ENCODE measurements at regions of chr5 and their contacts with region 1.

Region 1: GRCh38 chr5:120419127-120419526 is 45.0 kb upstream of the PRR16 start:
- DNase-seq: no peak
- ATAC-seq: no peak
- H3K4me3 ChIP-seq: no peak overlapping the region
- H3K27ac ChIP-seq: no peak overlapping the region
- H3K4me1 ChIP-seq: no peaks in the 10 kb centered on the region
- H3K27me3 ChIP-seq: no peaks in the 10 kb centered on the region
- CTCF ChIP-seq: no peak
- EP300 ChIP-seq: no peak
- POLR2A ChIP-seq: no peak
- RAD21 ChIP-seq: no peak

Region 2: DNA sequence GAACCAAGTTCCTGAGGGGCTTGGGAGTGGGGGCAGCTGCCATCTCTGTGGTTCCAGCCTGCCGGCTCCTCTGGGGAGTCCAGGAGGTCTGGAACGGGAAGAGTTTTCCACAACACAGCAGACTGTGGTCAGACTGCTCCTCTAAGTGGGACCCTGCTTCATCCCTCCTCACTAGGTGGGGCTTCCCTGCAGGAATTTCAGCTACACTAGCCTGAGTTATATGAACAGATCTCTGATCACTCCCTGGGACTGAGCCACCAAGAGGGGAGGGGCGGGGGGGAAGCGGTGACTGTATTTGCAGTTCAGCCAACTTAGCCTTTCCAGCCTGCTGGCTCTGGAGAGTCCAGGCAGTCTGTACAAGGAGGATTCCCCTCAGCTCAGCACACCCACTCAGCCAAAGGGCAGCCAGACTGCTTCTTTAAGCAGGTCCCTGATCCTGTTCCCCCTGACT is 1450.2 kb before region 1 on chr5:
- CTCF ChIA-PET with region 1: no interaction called
- POLR2A ChIA-PET with region 1: no interaction called
- in situ Hi-C with region 1: loop called (anchors 10 kb)
- intact Hi-C with region 1: no loop called
- DNase-seq: peak in 1 of 4 experiments; percentile 11
- ATAC-seq: peak; percentile 59
- H3K4me3 ChIP-seq: no peak overlapping the region
- H3K27ac ChIP-seq: no peak overlapping the region
- H3K4me1 ChIP-seq: no peaks in the 10 kb centered on the region; a peak in 1 of 5 replicates
- H3K27me3 ChIP-seq: no peaks in the 10 kb centered on the region
- CTCF ChIP-seq: no peak
- EP300 ChIP-seq: no peak
- POLR2A ChIP-seq: no peak
- RAD21 ChIP-seq: no peak

Measured in K562 (cell line).